ENCODE measurements at regions of chr3 and their contacts with region 1.

Region 1: DNA sequence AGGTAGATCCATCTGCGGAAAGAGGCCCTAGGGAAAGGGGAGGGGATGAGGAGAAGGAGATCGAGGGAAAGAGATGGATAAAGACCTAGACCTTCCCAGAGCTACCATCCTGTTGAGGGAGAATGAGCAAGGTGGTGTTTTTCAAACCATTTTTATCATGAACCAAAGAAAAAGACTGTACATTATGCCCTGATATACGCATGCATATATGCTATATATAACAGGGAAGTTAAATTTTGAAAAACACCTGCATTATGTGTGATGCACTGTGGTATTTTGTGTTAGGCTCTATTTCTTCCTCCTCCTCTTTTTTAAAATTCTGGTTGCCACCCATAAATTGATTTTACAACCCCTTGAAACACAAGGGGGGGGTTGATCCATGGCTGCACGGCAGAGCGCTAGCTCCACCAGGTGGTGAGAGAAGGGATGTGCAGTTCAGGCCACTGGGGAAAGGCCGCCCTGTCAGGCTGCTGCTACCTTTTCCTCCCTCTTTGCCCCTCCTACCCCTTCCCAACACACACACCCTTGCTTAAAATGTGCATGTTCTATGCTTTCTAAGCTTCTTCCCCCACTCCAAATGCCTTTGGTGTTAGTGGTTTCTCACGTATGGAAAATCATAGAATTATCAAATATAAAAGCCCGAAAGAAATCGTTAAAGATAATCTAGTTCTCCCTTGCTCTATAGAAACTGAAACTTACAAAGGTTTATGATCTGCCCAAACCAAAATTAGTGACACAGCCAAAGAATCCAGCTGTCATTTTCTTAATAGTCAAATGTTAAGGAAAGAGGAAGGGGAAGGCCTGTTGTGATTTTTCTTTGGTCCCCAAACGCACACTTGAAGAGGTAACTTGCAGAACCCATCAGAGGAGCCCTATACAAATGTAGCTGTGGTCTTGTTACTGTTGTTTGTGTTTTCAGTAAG is 262.0 kb upstream of the UMPS start:
- DNase-seq: peak; percentile 50 to 84
- H3K4me3 ChIP-seq: no peak overlapping the region
- H3K27ac ChIP-seq: no peak overlapping the region
- H3K4me1 ChIP-seq: no peaks in the 10 kb centered on the region; a peak in 1 of 7 replicates
- H3K27me3 ChIP-seq: no peaks in the 10 kb centered on the region
- CTCF ChIP-seq: peak; percentile 95 to 100 (median 98)
- EP300 ChIP-seq: no peak
- POLR2A ChIP-seq: no peak
- RAD21 ChIP-seq: peak; percentile 99 to 100

Region 2: DNA sequence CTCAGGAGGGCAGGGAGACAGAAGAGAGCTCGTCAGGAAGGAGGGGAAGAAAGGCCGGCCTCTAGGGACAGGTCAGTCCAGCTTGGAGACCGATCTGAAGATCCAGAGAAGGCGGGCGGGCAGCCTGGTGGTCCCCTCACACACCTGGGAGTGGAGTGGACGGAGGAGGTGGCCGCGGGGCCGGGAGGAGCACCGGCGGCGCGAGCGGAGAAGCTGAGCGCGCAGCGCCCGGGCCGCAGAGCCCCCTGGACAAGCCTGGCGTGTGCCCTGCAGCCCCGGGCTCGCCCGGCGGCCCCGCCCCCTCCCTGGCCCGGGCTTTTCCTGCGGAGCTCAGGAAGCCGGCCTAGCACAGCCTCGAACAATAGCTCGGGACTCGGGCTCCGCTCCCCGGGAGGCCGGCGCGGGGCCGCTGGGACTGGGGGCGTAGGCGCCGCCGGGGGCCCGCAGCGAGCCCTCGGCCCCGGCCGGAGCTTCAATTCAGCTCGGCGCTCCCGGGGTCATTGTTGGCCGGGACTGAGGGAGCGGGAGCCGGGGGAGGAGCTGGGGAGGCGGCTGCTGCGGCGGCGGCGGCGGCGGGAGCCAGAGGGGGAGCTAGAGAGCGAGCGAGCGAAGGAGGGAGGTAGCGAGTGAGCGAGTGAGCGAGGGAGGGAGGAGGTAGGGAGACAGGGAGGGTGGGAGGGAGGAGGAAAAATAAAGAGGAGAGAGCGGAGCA is 435.4 kb before region 1 on chr3:
- CTCF ChIA-PET with region 1: interaction called, 13 read pairs
- POLR2A ChIA-PET with region 1: no interaction called
- DNase-seq: peak; percentile 44 to 95
- H3K4me3 ChIP-seq: peak overlapping the region; percentile 68 to 98 (median 86)
- H3K27ac ChIP-seq: peak overlapping the region; percentile 30; the same call in 1 of the 2 replicates
- H3K4me1 ChIP-seq: peaks cover 0 to 7% (median 2%) of the 10 kb centered on the region in 4 experiments; a peak in 3 of 7 replicates
- H3K27me3 ChIP-seq: peaks cover 12 to 39% (median 36%) of the 10 kb centered on the region in 4 experiments
- CTCF ChIP-seq: peak; percentile 39 to 63 (median 48)
- EP300 ChIP-seq: peak in 1 of 2 experiments; percentile 86; a peak in 1 of 3 replicates
- POLR2A ChIP-seq: peak; percentile 39 to 65; a peak in 2 of 3 replicates
- RAD21 ChIP-seq: peak in 1 of 2 experiments; percentile 27; a peak in 2 of 4 replicates

Region 3: DNA sequence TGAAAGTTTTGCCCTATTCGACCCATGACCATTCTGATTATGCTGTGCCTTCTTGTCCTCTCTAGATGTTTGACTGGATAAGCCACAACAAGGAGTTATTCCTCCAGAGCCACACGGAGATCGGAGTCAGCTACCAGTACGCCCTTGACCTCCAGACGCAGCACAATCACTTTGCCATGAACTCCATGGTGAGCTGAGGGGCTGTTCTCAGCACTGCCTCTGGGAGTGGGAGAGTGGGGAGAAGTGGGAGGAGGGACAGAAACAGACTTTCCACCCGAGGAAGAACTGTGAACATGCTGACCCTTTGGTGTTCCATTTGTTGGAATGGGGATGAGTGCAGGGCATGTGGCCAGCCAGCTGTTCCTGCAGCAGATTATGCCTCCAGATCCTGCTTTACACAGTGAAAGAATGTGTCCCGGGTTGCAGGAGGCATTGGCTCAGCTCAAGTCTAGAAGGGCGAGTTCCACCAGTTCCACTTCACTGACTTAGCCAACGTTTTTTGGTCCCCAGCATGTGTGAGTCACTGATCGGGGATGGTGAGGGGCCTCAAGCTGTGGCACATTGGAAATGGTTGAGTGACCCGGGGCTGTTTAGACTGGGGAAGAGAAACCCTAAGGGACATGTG is 169.4 kb before region 1 on chr3:
- CTCF ChIA-PET with region 1: interaction called, 21 read pairs
- POLR2A ChIA-PET with region 1: no interaction called
- DNase-seq: no peak
- H3K4me3 ChIP-seq: no peak overlapping the region
- H3K27ac ChIP-seq: no peak overlapping the region
- H3K4me1 ChIP-seq: no peaks in the 10 kb centered on the region; a peak in 1 of 7 replicates
- H3K27me3 ChIP-seq: no peaks in the 10 kb centered on the region
- CTCF ChIP-seq: no peak
- EP300 ChIP-seq: no peak
- POLR2A ChIP-seq: no peak
- RAD21 ChIP-seq: no peak

Region 4: DNA sequence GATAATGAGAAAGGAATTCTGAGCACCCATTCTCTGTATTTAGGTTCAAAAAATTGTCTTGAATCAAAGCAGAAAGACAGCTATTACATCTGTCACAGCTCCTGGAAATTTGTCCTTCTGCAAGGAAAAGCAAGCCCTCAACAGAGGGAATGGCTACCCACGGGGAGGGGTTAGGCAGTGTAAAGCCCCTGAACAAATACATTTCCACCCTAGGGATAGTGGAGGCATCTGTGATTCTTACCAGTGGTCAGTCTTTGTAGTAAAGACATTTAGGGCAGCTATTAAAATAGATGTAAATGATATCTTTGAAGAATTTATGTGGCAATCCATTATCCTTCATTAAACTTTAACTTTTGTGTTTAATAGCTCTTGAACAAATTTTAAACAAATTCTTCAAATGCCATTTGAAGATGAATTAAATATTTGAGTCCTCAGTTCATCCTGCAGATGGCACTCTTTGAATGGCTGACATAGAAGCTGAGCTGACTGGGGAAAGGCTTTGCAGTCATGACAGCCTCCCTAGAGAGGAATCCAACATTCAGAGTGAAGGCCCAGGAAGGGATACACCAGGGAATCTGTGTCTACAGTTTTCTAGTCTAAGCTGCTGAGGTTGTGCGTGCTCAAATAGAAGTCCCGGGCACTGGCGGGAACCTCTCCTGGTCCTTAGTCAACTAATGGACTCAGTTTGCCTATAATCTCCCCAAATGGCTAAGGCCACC is 116.7 kb before region 1 on chr3:
- CTCF ChIA-PET with region 1: interaction called, 220 read pairs
- POLR2A ChIA-PET with region 1: no interaction called
- DNase-seq: no peak
- H3K4me3 ChIP-seq: no peak overlapping the region
- H3K27ac ChIP-seq: no peak overlapping the region
- H3K4me1 ChIP-seq: no peaks in the 10 kb centered on the region
- H3K27me3 ChIP-seq: no peaks in the 10 kb centered on the region
- CTCF ChIP-seq: peak in 2 of 3 experiments; percentile 53 to 83; a peak in 3 of 4 replicates
- EP300 ChIP-seq: 0 out of 3 replicates have a peak, but pooled peaks of 1 of the 2 experiments have one; percentile 45
- POLR2A ChIP-seq: no peak
- RAD21 ChIP-seq: peak; percentile 92 to 93

Region 5: GRCh38 chr3:124451630-124452317 is 16.5 kb before region 1 on chr3:
- CTCF ChIA-PET with region 1: interaction called, 32 read pairs
- POLR2A ChIA-PET with region 1: no interaction called
- DNase-seq: no peak
- H3K4me3 ChIP-seq: no peak overlapping the region
- H3K27ac ChIP-seq: no peak overlapping the region
- H3K4me1 ChIP-seq: no peaks in the 10 kb centered on the region
- H3K27me3 ChIP-seq: no peaks in the 10 kb centered on the region
- CTCF ChIP-seq: no peak
- EP300 ChIP-seq: no peak
- POLR2A ChIP-seq: no peak
- RAD21 ChIP-seq: no peak

Region 6: DNA sequence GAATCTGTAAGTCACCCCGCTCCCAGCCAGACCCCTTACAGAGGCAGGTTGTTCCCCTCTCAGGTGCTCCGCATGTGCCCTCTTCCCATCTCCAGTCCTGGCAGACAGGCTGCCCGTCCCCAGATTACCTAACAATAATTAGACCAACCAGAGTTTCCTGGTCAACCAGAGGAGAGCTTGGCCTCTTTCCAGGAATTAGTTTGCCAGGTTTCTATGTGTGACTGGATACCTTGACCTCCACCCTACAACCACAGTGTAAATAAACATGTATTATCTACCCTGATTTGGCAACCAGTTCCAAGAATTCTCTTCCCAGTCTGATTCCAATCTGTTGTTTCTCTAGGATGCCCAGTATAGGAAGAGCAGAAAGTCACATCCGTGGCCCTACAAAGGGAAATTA is 84.0 kb after region 1 on chr3:
- CTCF ChIA-PET with region 1: interaction called, 37 read pairs
- POLR2A ChIA-PET with region 1: no interaction called
- DNase-seq: no peak
- H3K4me3 ChIP-seq: no peak overlapping the region
- H3K27ac ChIP-seq: no peak overlapping the region
- H3K4me1 ChIP-seq: no peaks in the 10 kb centered on the region
- H3K27me3 ChIP-seq: peaks cover 0 to 7% (median 4%) of the 10 kb centered on the region in 4 experiments; a peak in 3 of 7 replicates
- CTCF ChIP-seq: no peak
- EP300 ChIP-seq: no peak
- POLR2A ChIP-seq: no peak
- RAD21 ChIP-seq: no peak

Region 7: GRCh38 chr3:124669470-124669869 is 201.2 kb after region 1 on chr3:
- CTCF ChIA-PET with region 1: no interaction called
- POLR2A ChIA-PET with region 1: no interaction called
- DNase-seq: no peak
- H3K4me3 ChIP-seq: no peak overlapping the region
- H3K27ac ChIP-seq: no peak overlapping the region
- H3K4me1 ChIP-seq: no peaks in the 10 kb centered on the region
- H3K27me3 ChIP-seq: no peaks in the 10 kb centered on the region
- CTCF ChIP-seq: no peak
- EP300 ChIP-seq: no peak
- POLR2A ChIP-seq: no peak
- RAD21 ChIP-seq: no peak